ENCODE measurements at regions of chr4 and their contacts with region 1.

Region 1: DNA sequence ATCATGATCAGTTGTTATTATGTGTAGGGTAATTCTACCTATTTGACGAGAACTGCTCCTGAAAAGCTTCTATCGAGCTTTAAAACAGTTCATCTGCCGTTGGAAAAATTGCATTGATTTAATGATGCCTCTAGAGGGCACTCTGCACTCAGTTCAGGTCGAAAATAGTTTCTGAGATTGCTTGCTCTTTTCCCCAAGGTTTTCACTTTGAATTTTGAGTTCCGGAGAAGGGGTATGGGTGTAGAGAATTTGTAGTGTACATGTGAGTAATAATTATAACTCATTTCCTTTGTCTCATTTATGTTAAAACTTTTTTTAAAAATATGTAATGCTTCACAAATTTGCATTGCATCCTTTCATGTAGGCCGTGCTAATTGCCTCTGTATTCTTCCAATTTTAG is 28.4 kb upstream of the TNIP3 start:
- DNase-seq: peak in 5 of 14 experiments; percentile 6 to 72 (median 67)
- ATAC-seq: no peak
- H3K4me3 ChIP-seq: no peak overlapping the region
- H3K4me3 Mint-ChIP-seq: peak overlapping the region; percentile 76
- H3K27ac ChIP-seq: no peak overlapping the region
- H3K27ac Mint-ChIP-seq: peak overlapping the region; percentile 81
- H3K4me1 ChIP-seq: peaks cover 24% of the 10 kb centered on the region
- H3K4me1 Mint-ChIP-seq: peaks cover 55% of the 10 kb centered on the region
- H3K27me3 ChIP-seq: no peaks in the 10 kb centered on the region
- H3K27me3 Mint-ChIP-seq: no peaks in the 10 kb centered on the region
- CTCF ChIP-seq: peak; percentile 90

Region 2: DNA sequence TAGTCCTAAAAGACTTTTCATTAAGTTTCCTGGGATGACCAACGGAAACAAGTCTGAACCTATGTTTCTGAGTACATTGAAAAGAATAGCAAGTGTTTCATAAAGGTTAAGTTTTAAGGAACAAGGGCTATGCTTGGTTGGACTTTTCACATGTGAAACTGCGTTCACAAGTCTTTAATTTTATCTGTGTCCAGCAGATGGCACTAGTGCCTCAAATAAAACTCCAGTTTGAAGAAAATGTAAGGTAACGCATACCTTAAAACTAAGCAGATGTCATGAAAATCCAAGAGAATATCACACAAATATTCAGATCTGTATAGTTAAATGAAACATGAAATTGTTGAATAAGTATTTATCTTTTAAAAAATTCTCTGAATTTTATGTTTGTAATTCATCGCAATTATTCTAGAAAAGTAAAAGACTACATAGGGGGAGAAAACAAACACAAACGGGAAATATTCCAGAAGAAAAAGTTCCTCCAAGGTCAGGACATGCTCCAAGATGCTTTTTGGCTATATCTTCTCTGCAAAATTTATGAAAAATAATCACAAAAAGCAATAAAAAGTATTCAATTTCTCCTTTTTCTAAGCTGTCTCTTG is 1036.3 kb before region 1 on chr4:
- CTCF ChIA-PET with region 1: no interaction called
- POLR2A ChIA-PET with region 1: no interaction called
- intact Hi-C with region 1: loop called in 1 of 2 experiments (anchors 5 kb)
- DNase-seq: peak in 7 of 14 experiments; percentile 3 to 81 (median 53)
- ATAC-seq: peak; percentile 55
- H3K4me3 ChIP-seq: no peak overlapping the region
- H3K4me3 Mint-ChIP-seq: no peak overlapping the region
- H3K27ac ChIP-seq: no peak overlapping the region
- H3K27ac Mint-ChIP-seq: no peak overlapping the region
- H3K4me1 ChIP-seq: no peaks in the 10 kb centered on the region
- H3K4me1 Mint-ChIP-seq: no peaks in the 10 kb centered on the region
- H3K27me3 ChIP-seq: no peaks in the 10 kb centered on the region
- H3K27me3 Mint-ChIP-seq: peaks cover 12% of the 10 kb centered on the region
- CTCF ChIP-seq: peak; percentile 86

Region 3: GRCh38 chr4:121156822-121157769 is 35.4 kb before region 1 on chr4:
- CTCF ChIA-PET with region 1: interaction called, 9 read pairs
- POLR2A ChIA-PET with region 1: interaction called, 12 read pairs
- intact Hi-C with region 1: loop called in 1 of 2 experiments (anchors 2 kb)
- DNase-seq: peak in 9 of 14 experiments; percentile 8 to 60 (median 32)
- ATAC-seq: peak; percentile 30
- H3K4me3 ChIP-seq: peak overlapping the region; percentile 64
- H3K4me3 Mint-ChIP-seq: peak overlapping the region; percentile 88
- H3K27ac ChIP-seq: peak overlapping the region; percentile 10
- H3K27ac Mint-ChIP-seq: peak overlapping the region; percentile 82
- H3K4me1 ChIP-seq: peaks cover 38% of the 10 kb centered on the region
- H3K4me1 Mint-ChIP-seq: peaks cover 68% of the 10 kb centered on the region
- H3K27me3 ChIP-seq: no peaks in the 10 kb centered on the region
- H3K27me3 Mint-ChIP-seq: no peaks in the 10 kb centered on the region
- CTCF ChIP-seq: no peak

Region 4: DNA sequence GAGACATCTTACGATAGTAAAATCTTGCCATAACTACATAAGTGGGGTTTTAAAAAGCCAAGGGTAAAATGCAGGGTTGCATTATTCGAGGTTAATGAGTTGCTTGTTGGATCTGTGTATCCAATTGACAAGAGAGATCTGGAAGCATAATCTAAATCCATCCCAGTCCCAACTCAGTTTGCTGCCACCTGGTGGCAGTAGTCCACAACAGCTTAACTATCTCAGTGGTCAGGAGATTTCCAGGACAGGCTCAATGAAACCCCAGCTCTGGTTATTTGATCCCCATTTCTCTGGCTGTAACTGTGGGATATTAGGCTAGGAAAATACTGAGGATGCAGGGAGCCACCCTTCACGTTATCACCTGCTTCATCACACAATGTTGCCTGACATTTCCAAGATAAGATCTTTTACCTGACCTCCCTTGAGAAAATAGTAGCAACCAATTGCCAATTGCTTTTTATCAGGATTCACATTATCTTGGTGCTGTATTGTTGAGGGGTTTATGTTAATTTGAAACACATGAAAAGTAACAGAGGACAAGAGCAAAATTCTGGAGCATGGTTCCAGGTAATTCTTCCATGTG is 59.8 kb after region 1 on chr4:
- CTCF ChIA-PET with region 1: interaction called, 16 read pairs
- POLR2A ChIA-PET with region 1: interaction called, 7 read pairs
- intact Hi-C with region 1: loop called (anchors 1 kb)
- DNase-seq: peak; percentile 21 to 78 (median 44)
- ATAC-seq: peak; percentile 27
- H3K4me3 ChIP-seq: no peak overlapping the region
- H3K4me3 Mint-ChIP-seq: no peak overlapping the region
- H3K27ac ChIP-seq: no peak overlapping the region
- H3K27ac Mint-ChIP-seq: no peak overlapping the region
- H3K4me1 ChIP-seq: peaks cover 35% of the 10 kb centered on the region
- H3K4me1 Mint-ChIP-seq: peaks cover 54% of the 10 kb centered on the region
- H3K27me3 ChIP-seq: no peaks in the 10 kb centered on the region
- H3K27me3 Mint-ChIP-seq: no peaks in the 10 kb centered on the region
- CTCF ChIP-seq: peak; percentile 76

Region 5: GRCh38 chr4:121726642-121727268 is 534.3 kb after region 1 on chr4:
- CTCF ChIA-PET with region 1: no interaction called
- POLR2A ChIA-PET with region 1: no interaction called
- intact Hi-C with region 1: loop called in 1 of 2 experiments (anchors 5 kb)
- DNase-seq: peak in 3 of 14 experiments; percentile 66 to 68 (median 67)
- ATAC-seq: peak; percentile 85
- H3K4me3 ChIP-seq: no peak overlapping the region
- H3K4me3 Mint-ChIP-seq: no peak overlapping the region
- H3K27ac ChIP-seq: no peak overlapping the region
- H3K27ac Mint-ChIP-seq: no peak overlapping the region
- H3K4me1 ChIP-seq: no peaks in the 10 kb centered on the region
- H3K4me1 Mint-ChIP-seq: no peaks in the 10 kb centered on the region
- H3K27me3 ChIP-seq: no peaks in the 10 kb centered on the region
- H3K27me3 Mint-ChIP-seq: no peaks in the 10 kb centered on the region
- CTCF ChIP-seq: peak; percentile 69

Region 6: DNA sequence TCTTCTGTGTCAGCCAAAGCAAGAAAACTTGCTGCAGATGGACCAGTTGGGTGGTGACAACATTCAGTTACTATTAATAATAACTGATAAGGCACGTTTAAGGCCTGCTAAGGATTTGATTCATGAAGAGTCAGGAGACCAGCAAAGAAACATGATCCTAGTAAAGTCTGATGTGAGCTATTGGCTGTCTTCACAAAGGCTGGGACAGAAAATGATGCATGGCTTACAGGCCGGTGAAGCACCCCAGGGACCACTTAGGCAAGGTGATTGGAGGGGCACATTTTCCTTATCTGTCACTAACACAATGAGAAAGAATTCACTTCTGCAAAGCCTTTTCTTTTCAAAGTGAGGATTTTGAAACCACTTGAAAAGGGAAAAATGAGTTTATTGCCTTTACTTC is 824.8 kb after region 1 on chr4:
- CTCF ChIA-PET with region 1: no interaction called
- POLR2A ChIA-PET with region 1: no interaction called
- intact Hi-C with region 1: no loop called
- DNase-seq: no peak
- ATAC-seq: no peak
- H3K4me3 ChIP-seq: no peak overlapping the region
- H3K4me3 Mint-ChIP-seq: no peak overlapping the region
- H3K27ac ChIP-seq: no peak overlapping the region
- H3K27ac Mint-ChIP-seq: no peak overlapping the region
- H3K4me1 ChIP-seq: no peaks in the 10 kb centered on the region
- H3K4me1 Mint-ChIP-seq: no peaks in the 10 kb centered on the region
- H3K27me3 ChIP-seq: peaks cover 4 to 9% of the 10 kb centered on the region in 2 experiments
- H3K27me3 Mint-ChIP-seq: peaks cover 54% of the 10 kb centered on the region
- CTCF ChIP-seq: no peak

Measured in CD4-positive, alpha-beta T cell (primary cell).